Prostate gland (tissue), 2 donors: ENCODE measurements at regions of chr1 and their contacts with region 1.

Region 1: GRCh38 chr1:28983509-28984310 is 69.3 kb downstream of the EPB41 start:
- DNase-seq: no peak
- H3K4me3 ChIP-seq: no peak overlapping the region
- H3K27ac ChIP-seq: no peak overlapping the region
- H3K4me1 ChIP-seq: no peaks in the 10 kb centered on the region
- H3K27me3 ChIP-seq: no peaks in the 10 kb centered on the region
- CTCF ChIP-seq: peak in 1 of 4 experiments; percentile 10
- POLR2A ChIP-seq: no peak

Region 2: GRCh38 chr1:28914228-28915030 is 69.3 kb before region 1 on chr1 and contains the start of gene EPB41:
- intact Hi-C with region 1: loop called (anchors 2 kb)
- DNase-seq: peak; percentile 94
- H3K4me3 ChIP-seq: peak within 1 kb of the TSS; percentile 70 to 78
- H3K27ac ChIP-seq: peak within 1 kb of the TSS; percentile 71 to 75
- H3K4me1 ChIP-seq: peaks cover 6% of the 10 kb centered on the region
- H3K27me3 ChIP-seq: no peaks in the 10 kb centered on the region
- CTCF ChIP-seq: peak in 2 of 4 experiments; percentile 13 to 18
- POLR2A ChIP-seq: peak; percentile 76
- total RNA-seq, gene EPB41: 39.4 to 54.4 TPM